HEK293 (cell line): ENCODE measurements at regions of chr1 and their contacts with region 1.

Region 1: GRCh38 chr1:87328272-87329050 is at the start of gene LMO4:
- H3K4me3 ChIP-seq: peak within 1 kb of the TSS; percentile 73
- H3K27ac ChIP-seq: peak within 1 kb of the TSS; percentile 97
- H3K4me1 ChIP-seq: peaks cover 21% of the 10 kb centered on the region
- CTCF ChIP-seq: no peak

Region 2: DNA sequence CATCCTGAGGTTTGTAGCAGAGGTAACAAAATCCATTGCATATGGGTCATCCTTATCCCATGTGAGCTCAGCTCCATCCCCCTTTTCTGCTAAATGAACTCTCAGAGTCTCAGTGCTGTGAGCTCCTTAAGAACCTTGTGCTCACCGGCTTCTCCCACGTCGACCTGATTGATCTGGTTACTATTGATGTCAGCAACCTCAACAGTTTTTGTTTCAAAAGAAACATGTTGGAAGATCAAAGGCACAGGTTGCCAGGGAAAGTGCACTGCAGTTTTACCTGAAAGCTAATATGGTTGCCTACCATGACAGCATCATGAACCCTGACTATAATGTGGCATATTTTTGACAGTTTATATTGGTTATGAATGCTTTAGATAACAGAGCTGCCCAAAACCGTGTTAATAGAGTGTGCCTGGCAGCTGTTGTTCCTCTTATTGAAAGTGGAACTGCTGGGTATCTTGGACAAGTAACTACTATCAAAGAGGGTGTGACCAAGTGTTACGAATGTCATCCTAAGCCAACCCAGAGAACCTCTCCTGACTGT is 282.6 kb before region 1 on chr1:
- CTCF ChIA-PET with region 1: no interaction called
- POLR2A ChIA-PET with region 1: no interaction called
- H3K4me3 ChIP-seq: no peak overlapping the region
- H3K27ac ChIP-seq: no peak overlapping the region
- H3K4me1 ChIP-seq: no peaks in the 10 kb centered on the region
- CTCF ChIP-seq: no peak

Region 3: DNA sequence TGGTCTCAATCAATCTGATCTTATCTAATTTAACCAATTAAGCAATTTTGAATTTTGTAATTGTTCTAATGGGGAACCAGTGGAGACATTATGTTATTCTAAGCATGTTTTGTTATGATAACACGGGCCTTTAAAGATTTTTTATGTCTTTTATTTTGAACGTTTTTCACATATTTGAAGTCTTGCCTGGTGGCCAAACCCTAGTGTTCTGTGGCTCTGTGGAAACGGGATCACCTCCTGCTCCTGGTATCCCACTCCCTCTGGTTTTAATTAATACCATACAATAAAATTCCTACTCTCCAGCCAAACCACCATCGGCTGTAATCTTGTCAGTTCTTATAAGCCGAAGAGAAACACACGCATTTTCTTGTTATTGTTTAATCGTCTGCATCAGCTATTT is 22.7 kb before region 1 on chr1:
- CTCF ChIA-PET with region 1: interaction called, 15 read pairs
- POLR2A ChIA-PET with region 1: interaction called, 3 read pairs
- H3K4me3 ChIP-seq: no peak overlapping the region
- H3K27ac ChIP-seq: no peak overlapping the region
- H3K4me1 ChIP-seq: no peaks in the 10 kb centered on the region
- CTCF ChIP-seq: no peak

Region 4: GRCh38 chr1:87318056-87318650 is 10.3 kb before region 1 on chr1:
- CTCF ChIA-PET with region 1: interaction called, 12 read pairs
- POLR2A ChIA-PET with region 1: interaction called, 14 read pairs
- H3K4me3 ChIP-seq: no peak overlapping the region
- H3K27ac ChIP-seq: no peak overlapping the region
- H3K4me1 ChIP-seq: no peaks in the 10 kb centered on the region
- CTCF ChIP-seq: no peak

Region 5: GRCh38 chr1:87344221-87344620 is 15.8 kb after region 1 on chr1:
- CTCF ChIA-PET with region 1: interaction called, 5 read pairs
- POLR2A ChIA-PET with region 1: interaction called, 12 read pairs
- H3K4me3 ChIP-seq: no peak overlapping the region
- H3K27ac ChIP-seq: no peak overlapping the region
- H3K4me1 ChIP-seq: no peaks in the 10 kb centered on the region
- CTCF ChIP-seq: no peak

Region 6: DNA sequence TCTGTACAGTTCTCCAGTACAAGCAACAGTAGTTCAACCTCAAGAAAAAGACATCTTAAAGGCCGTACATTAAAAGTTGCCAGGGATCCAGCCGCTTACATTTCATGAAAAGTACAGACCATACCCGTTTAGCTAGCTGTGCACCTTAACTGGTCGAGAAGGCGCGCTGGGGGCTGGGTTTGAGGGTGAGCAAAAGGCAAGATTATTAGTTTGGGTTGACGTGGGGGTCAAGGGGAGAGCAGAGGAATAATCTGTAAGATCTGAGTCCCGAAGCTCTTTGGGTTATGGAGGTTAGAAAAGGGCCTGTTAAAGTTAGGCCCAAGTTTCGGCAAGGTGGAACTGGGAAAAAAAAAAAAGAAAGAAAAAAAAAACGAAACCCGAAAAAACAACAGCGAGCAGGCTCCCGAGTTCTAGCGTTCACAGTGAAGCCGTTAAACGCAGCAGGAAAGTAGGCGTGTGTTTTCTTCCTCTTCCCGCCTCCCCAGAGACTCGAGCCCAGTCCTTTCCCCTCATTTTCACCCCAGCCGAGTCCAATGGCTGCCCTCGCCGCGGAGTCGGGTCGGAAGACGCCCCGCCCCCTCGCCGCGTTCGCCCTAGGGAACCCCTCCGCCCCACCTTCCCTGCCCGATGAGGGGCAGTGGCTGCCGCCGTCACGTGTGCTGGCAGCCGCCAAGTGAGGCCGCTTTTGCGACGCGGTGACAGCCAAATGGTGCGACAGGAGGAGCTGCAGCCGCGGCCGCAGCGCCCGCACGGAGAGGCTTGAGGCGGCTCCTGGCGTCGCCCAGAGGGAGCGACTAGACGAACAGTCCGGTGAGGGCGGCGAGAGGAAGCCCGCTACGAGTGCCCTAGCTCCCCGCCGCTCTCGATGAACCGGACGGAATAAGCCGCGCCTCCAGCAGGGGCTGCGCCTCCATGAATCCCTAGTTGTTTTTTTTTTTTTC is 1355.3 kb after region 1 on chr1 and contains the start of gene PKN2:
- CTCF ChIA-PET with region 1: no interaction called
- POLR2A ChIA-PET with region 1: interaction called, 11 read pairs
- H3K4me3 ChIP-seq: peak within 1 kb of the TSS; percentile 90
- H3K27ac ChIP-seq: peak within 1 kb of the TSS; percentile 97
- H3K4me1 ChIP-seq: peaks cover 2% of the 10 kb centered on the region; the same call in 1 of the 2 replicates
- CTCF ChIP-seq: peak; percentile 86